ENCODE measurements at regions of chr14 and their contacts with region 1.

Region 1: DNA sequence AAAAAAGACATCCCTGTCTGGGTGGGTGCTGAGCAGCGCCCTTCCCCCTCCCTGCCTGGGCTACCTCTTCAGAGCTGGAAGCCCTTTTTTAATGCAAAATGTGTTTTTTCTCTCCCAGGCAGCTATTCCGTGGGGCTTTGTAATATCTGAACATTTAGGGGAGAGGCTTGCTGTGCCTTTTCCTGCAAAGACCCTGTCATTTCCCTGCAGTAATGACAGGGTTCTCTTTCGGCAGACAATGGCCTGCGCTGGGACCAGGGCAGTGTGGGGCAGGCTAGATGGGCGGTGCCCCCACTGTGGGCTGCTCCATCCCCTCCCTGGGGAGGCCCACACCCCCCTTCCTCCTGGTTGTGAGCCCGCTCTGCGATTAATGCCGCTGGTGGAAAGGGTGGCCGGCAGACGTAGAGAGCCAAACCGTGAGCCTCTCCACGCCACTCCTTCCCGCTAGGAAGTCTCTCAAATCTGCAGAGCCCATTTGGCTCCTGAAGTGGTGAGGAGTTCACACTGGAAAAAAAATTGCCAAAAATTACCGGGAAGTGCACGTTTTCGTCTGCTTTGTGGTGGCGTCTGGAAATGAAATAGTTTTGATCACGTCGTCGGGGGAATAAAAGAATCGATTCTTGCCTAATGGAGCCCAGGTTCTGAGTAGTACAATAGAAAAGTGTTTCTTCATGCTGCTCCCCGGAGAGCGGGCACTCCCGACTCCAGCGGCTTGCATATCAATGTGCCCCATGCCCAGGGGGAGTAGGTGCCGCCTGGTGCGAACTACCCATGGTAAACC is 31.5 kb downstream of the KIF26A start:
- DNase-seq: no peak
- H3K4me3 Mint-ChIP-seq: no peak overlapping the region
- H3K27ac Mint-ChIP-seq: no peak overlapping the region
- H3K4me1 Mint-ChIP-seq: no peaks in the 10 kb centered on the region
- H3K27me3 Mint-ChIP-seq: no peaks in the 10 kb centered on the region
- CTCF ChIP-seq: no peak

Region 2: GRCh38 chr14:103808403-103809001 is 361.4 kb before region 1 on chr14:
- CTCF ChIA-PET with region 1: no interaction called
- POLR2A ChIA-PET with region 1: no interaction called
- intact Hi-C with region 1: no loop called
- DNase-seq: peak; percentile 88
- H3K4me3 Mint-ChIP-seq: no peak overlapping the region
- H3K27ac Mint-ChIP-seq: no peak overlapping the region
- H3K4me1 Mint-ChIP-seq: peaks cover 14% of the 10 kb centered on the region
- H3K27me3 Mint-ChIP-seq: no peaks in the 10 kb centered on the region
- CTCF ChIP-seq: peak; percentile 83

Region 3: GRCh38 chr14:104031384-104031783 is 138.5 kb before region 1 on chr14:
- CTCF ChIA-PET with region 1: no interaction called
- POLR2A ChIA-PET with region 1: no interaction called
- intact Hi-C with region 1: no loop called
- DNase-seq: no peak
- H3K4me3 Mint-ChIP-seq: no peak overlapping the region
- H3K27ac Mint-ChIP-seq: no peak overlapping the region
- H3K4me1 Mint-ChIP-seq: no peaks in the 10 kb centered on the region
- H3K27me3 Mint-ChIP-seq: peaks cover 15% of the 10 kb centered on the region
- CTCF ChIP-seq: no peak

Region 4: GRCh38 chr14:104157016-104157928 is 12.6 kb before region 1 on chr14:
- CTCF ChIA-PET with region 1: no interaction called
- POLR2A ChIA-PET with region 1: no interaction called
- intact Hi-C with region 1: no loop called
- DNase-seq: no peak
- H3K4me3 Mint-ChIP-seq: no peak overlapping the region
- H3K27ac Mint-ChIP-seq: no peak overlapping the region
- H3K4me1 Mint-ChIP-seq: peaks cover 6% of the 10 kb centered on the region
- H3K27me3 Mint-ChIP-seq: no peaks in the 10 kb centered on the region
- CTCF ChIP-seq: peak; percentile 19

Region 5: DNA sequence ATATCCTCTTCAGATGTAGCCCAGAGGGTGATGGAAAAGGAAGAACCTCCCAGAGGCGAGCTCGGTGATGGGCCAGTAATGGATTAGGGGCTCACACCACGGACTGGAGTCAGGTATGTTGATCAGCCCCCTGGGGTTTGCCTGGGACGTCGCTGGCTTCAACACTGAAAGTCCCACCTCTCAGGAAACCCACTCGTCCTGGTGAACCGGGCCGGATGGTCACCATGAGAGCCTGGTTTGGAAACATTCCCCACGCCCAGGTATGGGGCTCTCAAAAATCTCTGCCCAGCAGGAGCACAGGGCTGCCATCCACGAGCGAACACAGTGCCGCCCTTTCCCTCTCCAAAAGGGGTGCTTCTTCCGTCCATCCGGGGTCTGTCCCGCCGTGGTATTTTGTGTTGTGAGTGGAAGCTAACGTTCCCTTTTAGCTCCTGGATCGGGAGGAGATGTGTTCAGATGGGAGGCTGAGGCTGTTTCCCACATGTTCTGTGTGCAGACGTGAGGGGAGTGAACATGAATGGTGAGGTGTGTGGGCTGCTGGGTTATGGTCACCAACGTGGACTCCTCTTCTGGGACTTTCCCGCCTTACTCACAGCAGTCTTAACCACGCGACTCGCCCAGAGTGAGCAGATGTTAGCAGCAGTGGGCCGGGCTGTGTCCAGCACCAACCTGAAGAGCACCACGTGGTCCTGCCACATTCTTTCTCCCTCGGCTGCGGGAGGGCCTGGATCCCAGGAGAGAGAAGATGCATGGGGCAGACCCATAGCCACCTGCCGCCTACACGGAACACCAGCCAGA is 107.7 kb after region 1 on chr14:
- CTCF ChIA-PET with region 1: no interaction called
- POLR2A ChIA-PET with region 1: no interaction called
- intact Hi-C with region 1: loop called (anchors 10 kb)
- DNase-seq: no peak
- H3K4me3 Mint-ChIP-seq: no peak overlapping the region
- H3K27ac Mint-ChIP-seq: no peak overlapping the region
- H3K4me1 Mint-ChIP-seq: peaks cover 11% of the 10 kb centered on the region
- H3K27me3 Mint-ChIP-seq: peaks cover 50% of the 10 kb centered on the region
- CTCF ChIP-seq: no peak

Measured in MCF 10A (cell line).